Transverse colon (tissue), 4 donors: ENCODE measurements at regions of chr5 and their contacts with region 1.

Region 1: GRCh38 chr5:92850886-92851285 is 730.1 kb downstream of the NR2F1-AS1 start:
- DNase-seq: no peak
- H3K4me3 ChIP-seq: no peak overlapping the region
- H3K27ac ChIP-seq: no peak overlapping the region
- H3K4me1 ChIP-seq: no peaks in the 10 kb centered on the region
- H3K27me3 ChIP-seq: no peaks in the 10 kb centered on the region
- CTCF ChIP-seq: no peak
- EP300 ChIP-seq: no peak
- POLR2A ChIP-seq: no peak

Region 2: DNA sequence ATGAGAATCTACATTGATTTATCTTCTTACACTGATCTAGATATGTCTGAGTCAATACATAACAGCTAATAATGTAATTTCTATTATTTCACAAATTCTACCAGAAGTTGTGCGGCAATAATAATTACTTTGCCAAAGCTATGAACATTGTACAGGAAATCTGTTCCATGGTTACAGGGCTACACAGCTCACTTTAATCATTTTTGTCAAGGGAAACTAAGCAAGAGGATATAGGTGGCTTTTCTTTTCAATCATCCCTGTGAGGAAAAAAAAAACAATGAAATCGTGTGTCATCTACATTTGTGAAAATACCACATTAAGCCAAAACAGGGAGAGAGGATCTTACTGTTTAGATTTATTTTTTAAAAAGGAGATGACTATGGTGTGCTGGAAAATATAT is 12.8 kb after region 1 on chr5:
- in situ Hi-C with region 1: no loop called
- intact Hi-C with region 1: loop called (anchors 1 kb)
- DNase-seq: no peak
- H3K4me3 ChIP-seq: no peak overlapping the region
- H3K27ac ChIP-seq: no peak overlapping the region
- H3K4me1 ChIP-seq: no peaks in the 10 kb centered on the region
- H3K27me3 ChIP-seq: no peaks in the 10 kb centered on the region
- CTCF ChIP-seq: no peak
- EP300 ChIP-seq: no peak
- POLR2A ChIP-seq: no peak